HepG2 (cell line): ENCODE measurements at regions of chr9 and their contacts with region 1.

Region 1: DNA sequence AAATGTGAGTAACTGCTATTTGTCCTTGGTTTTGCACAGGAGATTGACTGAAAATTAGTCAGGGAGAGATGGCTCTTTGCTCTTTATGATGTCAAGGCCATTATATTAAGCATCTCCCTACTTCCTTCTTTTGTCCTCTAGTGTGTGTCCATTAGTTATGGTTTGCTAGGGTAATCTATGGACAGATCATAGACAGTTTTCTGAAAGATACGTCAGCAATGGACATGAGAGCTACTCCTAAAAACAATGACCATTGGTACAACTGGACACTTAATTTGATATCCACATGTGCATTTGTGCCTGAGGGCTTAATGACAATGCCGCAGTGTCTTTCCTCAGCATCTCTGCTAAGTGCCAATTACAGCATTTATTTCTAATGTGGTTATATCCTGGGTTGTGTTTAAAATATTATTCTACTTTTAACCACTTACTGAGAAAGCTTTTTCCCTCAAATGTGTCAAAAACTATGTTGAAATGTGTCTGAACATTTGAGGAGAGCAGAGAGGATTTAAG is 218.2 kb upstream of the RFX3 start:
- DNase-seq: no peak
- ATAC-seq: no peak
- H3K4me3 ChIP-seq: no peak overlapping the region
- H3K27ac ChIP-seq: no peak overlapping the region
- H3K4me1 ChIP-seq: no peaks in the 10 kb centered on the region
- H3K27me3 ChIP-seq: no peaks in the 10 kb centered on the region
- CTCF ChIP-seq: no peak
- EP300 ChIP-seq: no peak
- POLR2A ChIP-seq: no peak
- RAD21 ChIP-seq: no peak

Region 2: GRCh38 chr9:3768698-3769458 is 24.9 kb after region 1 on chr9:
- CTCF ChIA-PET with region 1: no interaction called
- POLR2A ChIA-PET with region 1: no interaction called
- in situ Hi-C with region 1: no loop called
- intact Hi-C with region 1: loop called (anchors 1 kb)
- DNase-seq: no peak
- ATAC-seq: no peak
- H3K4me3 ChIP-seq: no peak overlapping the region
- H3K27ac ChIP-seq: no peak overlapping the region
- H3K4me1 ChIP-seq: no peaks in the 10 kb centered on the region
- H3K27me3 ChIP-seq: no peaks in the 10 kb centered on the region
- CTCF ChIP-seq: no peak
- EP300 ChIP-seq: no peak
- POLR2A ChIP-seq: no peak
- RAD21 ChIP-seq: no peak